Keratinocyte (primary cell): ENCODE measurements at regions of chr12 and their contacts with region 1.

Region 1: GRCh38 chr12:89051065-89051677 is 301.1 kb downstream of the DUSP6 start:
- DNase-seq: no peak
- H3K4me3 ChIP-seq: no peak overlapping the region
- H3K27ac ChIP-seq: no peak overlapping the region
- H3K4me1 ChIP-seq: no peaks in the 10 kb centered on the region
- H3K27me3 ChIP-seq: no peaks in the 10 kb centered on the region
- CTCF ChIP-seq: peak; percentile 51 to 81 (median 72)

Region 2: DNA sequence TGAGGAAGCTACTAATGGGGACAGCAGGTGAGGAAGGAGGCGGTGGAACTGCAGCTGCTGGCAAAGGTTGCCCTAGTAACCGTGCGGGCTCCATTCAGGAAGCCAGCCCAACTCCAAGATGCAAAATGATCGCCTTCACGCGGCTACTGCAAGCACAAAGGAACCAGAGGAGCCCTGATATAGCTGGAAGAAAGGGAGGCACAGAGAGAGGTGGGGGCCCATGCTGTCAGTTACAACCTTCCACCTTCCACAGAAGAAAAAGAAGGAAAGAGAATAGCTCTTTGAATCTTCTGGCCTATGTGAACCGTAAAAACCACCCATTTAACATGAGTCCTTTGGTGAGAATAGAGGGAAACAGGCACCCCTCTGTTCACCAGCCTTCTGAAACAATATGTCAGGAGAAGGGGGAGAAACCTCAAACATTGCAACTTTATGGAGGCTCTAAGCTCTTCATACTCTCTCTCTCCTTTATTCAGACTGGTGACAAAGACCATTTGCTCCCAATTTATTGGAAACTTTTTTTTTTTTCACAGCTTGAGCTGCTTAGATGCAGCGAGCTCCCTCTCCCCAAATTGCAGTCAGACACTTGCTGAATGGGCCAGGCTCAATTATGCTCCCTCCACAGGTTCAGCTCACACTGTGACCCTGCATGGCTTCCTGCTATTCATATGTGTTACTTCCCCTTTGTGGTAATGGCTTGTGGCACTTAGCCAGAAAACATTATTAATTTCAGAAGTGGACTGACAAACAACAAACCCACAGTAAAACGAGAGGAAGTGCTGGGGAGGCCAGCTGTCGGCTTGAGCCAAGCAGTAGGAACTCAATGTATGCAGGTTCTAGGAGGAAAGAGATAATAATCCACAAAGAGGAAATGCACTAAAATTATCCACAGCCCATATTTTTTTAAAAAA is 294.9 kb after region 1 on chr12:
- dilution Hi-C with region 1: loop called (anchors 25 kb)
- DNase-seq: no peak
- H3K4me3 ChIP-seq: no peak overlapping the region
- H3K27ac ChIP-seq: no peak overlapping the region
- H3K4me1 ChIP-seq: peaks cover 19% of the 10 kb centered on the region
- H3K27me3 ChIP-seq: no peaks in the 10 kb centered on the region
- CTCF ChIP-seq: no peak

Region 3: DNA sequence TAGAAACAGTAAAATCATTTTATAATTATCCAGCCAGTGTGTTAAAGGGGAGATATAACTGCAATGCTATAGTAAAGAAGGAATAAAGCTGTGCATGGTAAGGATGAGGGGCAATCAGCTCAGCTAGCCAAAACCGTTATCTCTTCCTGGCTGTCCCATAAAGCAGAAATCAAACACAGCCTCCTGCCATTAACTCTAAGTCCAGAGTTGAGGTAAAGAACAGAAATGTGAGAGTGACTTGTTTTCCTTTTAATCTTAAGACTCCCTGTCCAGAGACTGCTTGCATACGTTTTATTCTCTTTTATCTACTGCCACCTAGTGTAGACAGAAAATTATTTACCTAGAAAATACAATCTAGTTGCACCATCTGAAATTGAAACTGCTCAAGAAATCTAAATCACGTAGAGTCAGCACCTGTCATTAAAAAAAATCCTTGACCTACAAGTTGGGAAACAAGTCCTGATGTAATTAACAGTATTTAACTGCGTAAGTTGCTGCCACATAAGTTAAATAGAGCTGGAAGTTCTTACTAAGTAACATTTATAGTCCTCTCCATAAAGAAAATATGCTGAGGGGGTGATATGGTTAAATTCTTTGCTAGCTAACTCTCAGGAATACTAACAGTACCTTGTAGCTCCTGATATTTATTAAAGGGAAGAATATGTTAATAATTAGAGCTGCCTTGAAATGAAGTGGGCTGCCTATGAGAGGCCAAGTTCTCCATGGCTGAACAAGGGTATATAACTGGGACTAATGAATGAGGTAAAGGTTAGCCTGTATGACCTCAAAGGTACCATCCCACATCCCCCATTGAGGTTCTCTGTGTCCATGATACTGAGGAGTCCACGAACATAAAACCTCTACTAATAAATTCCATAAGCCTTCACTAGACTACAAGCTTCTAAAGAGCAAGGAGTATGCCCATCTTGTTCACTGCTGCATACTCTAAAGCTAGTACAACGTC is 410.8 kb after region 1 on chr12:
- dilution Hi-C with region 1: loop called (anchors 25 kb)
- DNase-seq: no peak
- H3K4me3 ChIP-seq: no peak overlapping the region
- H3K27ac ChIP-seq: peak overlapping the region; percentile 32
- H3K4me1 ChIP-seq: peaks cover 13% of the 10 kb centered on the region
- H3K27me3 ChIP-seq: no peaks in the 10 kb centered on the region
- CTCF ChIP-seq: peak in 2 of 3 experiments; percentile 23 to 52